ENCODE measurements at regions of chr16 and their contacts with region 1.

Region 1: DNA sequence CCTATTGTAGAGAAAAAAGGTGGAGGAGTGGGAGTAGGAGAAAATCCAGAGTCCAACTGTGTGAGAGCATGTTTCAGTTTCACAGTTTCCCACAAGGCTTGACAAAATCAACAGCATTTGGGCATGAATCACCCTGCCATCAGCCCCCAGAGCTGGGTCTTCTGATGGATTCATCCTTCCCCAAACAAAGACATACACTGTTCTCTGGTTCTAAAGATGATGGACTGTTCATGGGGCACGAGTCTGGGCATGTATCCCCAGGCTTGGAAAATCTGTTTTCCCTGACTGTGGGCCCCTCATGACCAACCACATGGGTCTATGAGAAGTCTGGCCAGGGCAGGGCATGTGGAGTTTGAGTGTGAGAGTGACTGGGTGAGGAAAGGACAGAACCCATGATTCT is 210.4 kb upstream of the IRX5 start:
- DNase-seq: no peak
- ATAC-seq: no peak
- H3K4me3 ChIP-seq: no peak overlapping the region
- H3K27ac ChIP-seq: no peak overlapping the region
- H3K4me1 ChIP-seq: no peaks in the 10 kb centered on the region
- H3K27me3 ChIP-seq: no peaks in the 10 kb centered on the region
- CTCF ChIP-seq: no peak

Region 2: DNA sequence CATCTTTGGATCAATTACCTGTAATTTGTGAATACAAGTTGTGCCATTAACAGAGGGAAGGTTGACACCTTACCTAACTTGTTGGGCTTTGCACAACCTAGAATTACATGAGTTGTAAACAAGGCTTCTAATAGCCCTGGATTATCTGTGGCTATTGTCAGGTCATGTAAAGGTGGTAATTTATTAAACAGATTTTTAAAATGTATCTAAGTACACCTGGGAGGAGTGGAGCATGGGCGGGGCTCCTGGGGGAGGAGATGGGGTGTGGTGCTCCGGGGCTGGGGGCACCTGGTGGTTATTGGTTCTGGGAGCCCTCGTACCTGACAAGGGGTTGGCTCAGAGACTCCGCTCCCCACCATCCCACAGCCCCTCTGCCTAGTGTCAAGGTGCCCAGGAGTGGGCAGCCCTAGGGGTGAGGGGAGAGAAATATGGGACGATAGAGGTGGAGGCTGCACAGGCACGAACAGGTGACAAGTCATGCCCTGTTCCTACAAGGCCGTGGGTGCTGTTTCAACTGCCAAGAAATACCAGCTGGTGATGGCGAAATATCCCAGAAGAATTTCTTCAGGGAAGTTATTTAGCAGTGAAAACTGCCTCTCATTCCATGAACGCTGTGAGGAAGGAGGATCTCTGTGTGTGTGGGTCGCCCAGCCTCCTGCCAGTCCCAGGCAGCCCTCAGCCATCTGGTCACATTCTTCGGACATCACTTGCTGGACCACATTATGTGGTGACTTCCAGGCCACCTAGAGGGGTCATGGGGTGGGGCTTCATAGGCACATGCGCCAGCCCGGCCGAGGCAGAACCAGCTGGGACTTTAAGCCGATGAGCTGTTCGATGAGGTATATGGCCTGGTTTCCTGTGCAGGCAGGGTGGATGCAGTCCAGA is 378.1 kb before region 1 on chr16:
- intact Hi-C with region 1: loop called in 1 of 10 experiments (anchors 5 kb)
- DNase-seq: no peak
- ATAC-seq: no peak
- H3K4me3 ChIP-seq: no peak overlapping the region
- H3K27ac ChIP-seq: no peak overlapping the region
- H3K4me1 ChIP-seq: no peaks in the 10 kb centered on the region
- H3K27me3 ChIP-seq: peaks cover 0 to 9% (median 0%) of the 10 kb centered on the region in 7 donors
- CTCF ChIP-seq: no peak

Measured in heart right ventricle (tissue), 16 donors.